ENCODE measurements at regions of chr18 and their contacts with region 1.

Region 1: GRCh38 chr18:9971313-9971920 is 57.6 kb downstream of the VAPA start:
- DNase-seq: peak; percentile 69 to 87 (median 75)
- H3K4me3 ChIP-seq: no peak overlapping the region
- H3K27ac ChIP-seq: no peak overlapping the region
- H3K4me1 ChIP-seq: no peaks in the 10 kb centered on the region
- H3K27me3 ChIP-seq: no peaks in the 10 kb centered on the region
- CTCF ChIP-seq: peak; percentile 70 to 85 (median 85)
- EP300 ChIP-seq: no peak
- POLR2A ChIP-seq: no peak

Region 2: DNA sequence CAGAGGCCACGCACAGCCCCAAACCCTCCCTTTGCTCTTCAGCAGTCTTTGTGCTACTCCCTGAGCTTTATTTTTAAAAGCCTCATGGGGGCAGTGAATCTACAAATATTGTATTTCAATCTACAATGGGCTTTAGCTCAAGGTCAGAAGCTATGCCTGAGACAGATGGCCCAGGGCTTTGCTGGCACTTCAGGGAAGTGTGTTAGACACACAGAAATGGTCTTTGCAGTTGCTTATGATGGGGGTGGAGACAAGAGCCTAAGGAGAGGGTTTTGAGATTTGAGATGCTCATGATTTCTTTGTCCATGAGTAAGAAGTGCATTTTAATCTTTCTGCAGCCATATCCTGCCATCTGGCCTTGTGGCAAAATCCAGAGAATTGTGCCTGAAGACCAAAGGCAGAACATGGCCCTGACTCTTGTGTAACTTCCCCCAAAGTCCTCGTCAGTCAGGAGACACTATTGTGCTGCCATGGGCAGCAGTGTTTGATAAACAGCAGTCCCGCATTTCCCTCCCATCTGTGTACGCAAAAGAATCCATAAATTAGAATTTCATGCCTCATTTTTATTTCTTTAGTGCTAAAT is 35.0 kb after region 1 on chr18:
- intact Hi-C with region 1: loop called in 1 of 4 experiments (anchors 5 kb)
- DNase-seq: no peak
- H3K4me3 ChIP-seq: no peak overlapping the region
- H3K27ac ChIP-seq: no peak overlapping the region
- H3K4me1 ChIP-seq: peaks cover 6% of the 10 kb centered on the region
- H3K27me3 ChIP-seq: no peaks in the 10 kb centered on the region
- CTCF ChIP-seq: peak in 1 of 3 donors; percentile 22
- EP300 ChIP-seq: no peak
- POLR2A ChIP-seq: no peak

Region 3: GRCh38 chr18:10032331-10033015 is 61.1 kb after region 1 on chr18:
- intact Hi-C with region 1: loop called in 1 of 4 experiments (anchors 5 kb)
- DNase-seq: peak in 4 of 5 donors; percentile 54 to 73 (median 60)
- H3K4me3 ChIP-seq: no peak overlapping the region
- H3K27ac ChIP-seq: peak overlapping the region in 1 of 2 donors; percentile 61
- H3K4me1 ChIP-seq: peaks cover 10% of the 10 kb centered on the region
- H3K27me3 ChIP-seq: no peaks in the 10 kb centered on the region
- CTCF ChIP-seq: peak in 1 of 3 donors; percentile 33
- EP300 ChIP-seq: no peak
- POLR2A ChIP-seq: no peak